ENCODE measurements at regions of chr7 and their contacts with region 1.

Region 1: DNA sequence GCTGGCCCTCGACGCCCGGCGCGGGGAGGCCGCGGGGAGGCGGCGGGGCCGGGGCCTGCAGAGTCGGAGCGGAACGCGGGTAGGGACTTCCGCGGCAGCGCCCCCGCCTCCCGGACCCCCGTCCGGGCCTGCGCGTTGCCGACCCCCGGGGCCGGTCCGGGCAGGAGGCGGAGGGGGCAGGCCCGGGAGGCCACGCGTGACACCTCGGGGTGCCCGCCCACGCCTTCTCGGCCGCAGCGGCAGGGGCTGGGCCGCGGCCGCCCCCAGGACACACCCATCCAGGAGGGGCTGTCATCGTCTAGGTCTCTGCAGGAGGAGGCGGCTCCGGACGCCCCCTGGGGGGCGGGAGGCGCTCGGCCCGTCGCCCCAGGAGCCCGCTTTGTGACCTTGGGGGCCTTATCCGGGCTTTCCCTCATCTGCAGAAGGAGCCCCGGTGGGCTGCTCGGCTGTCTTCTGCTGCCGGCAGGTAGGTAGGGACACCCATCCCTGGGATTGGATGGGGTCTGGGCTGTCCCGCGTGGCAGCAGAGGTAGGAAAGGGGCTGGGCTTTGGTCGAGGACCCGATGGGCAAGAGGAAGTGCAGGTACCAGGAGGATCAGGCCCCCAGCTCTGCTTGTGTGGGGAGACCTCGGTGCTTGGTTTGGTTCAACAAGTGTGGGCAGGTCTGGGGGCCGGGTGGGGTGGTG is 569 bp downstream of the ZNF316 start:
- DNase-seq: peak; percentile 68

Region 2: GRCh38 chr7:6495597-6496262 is 142.0 kb before region 1 on chr7:
- CTCF ChIA-PET with region 1: no interaction called
- POLR2A ChIA-PET with region 1: no interaction called
- DNase-seq: no peak

Region 3: GRCh38 chr7:6623589-6624245 is 14.0 kb before region 1 on chr7:
- CTCF ChIA-PET with region 1: interaction called, 3 read pairs
- POLR2A ChIA-PET with region 1: interaction called, 11 read pairs
- DNase-seq: no peak

Region 4: DNA sequence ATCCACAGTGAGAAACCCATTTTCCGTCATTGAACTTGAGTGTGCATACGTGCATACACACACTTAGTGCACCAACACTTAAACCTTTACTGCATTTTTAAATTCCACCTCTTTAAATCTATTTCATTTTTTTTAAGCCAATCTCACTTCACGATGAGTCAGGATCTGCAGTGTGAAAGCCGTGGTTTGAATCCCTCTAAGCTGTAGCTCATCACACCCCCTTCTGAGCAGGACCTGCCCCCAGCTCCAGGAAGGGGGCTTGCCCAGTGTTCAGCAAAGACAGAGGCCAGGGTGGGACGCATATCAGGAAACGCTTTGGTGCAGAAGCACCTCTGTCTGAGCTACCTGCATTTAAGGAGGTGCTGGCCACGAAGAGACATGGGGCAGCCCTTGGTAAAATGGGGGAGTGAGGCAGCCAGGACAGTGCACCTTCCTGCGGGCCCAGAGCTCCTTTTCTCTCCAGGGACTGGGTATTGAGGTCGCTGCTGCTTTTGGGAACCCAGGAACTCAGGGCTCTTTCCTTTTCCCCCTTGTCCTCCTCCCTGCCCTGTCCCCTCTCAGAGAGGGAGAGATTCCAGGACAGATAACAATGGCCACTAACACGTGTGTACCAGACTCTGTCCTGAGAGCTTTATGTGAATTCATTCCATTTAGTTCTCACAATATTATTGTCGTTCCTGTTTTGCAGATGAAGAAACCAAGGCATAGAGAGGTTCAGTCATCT is 21.1 kb after region 1 on chr7:
- CTCF ChIA-PET with region 1: no interaction called
- POLR2A ChIA-PET with region 1: no interaction called
- DNase-seq: no peak

Region 5: GRCh38 chr7:6675807-6676405 is 38.2 kb after region 1 on chr7:
- CTCF ChIA-PET with region 1: no interaction called
- POLR2A ChIA-PET with region 1: no interaction called
- DNase-seq: no peak

Measured in HEK293T (cell line).